ENCODE measurements at regions of chr12 and their contacts with region 1.

Region 1: GRCh38 chr12:120181991-120182631 is 12.4 kb downstream of the GCN1 start:
- DNase-seq: peak; percentile 61 to 88
- H3K4me3 ChIP-seq: no peak overlapping the region
- H3K27ac ChIP-seq: peak overlapping the region; percentile 84
- H3K4me1 ChIP-seq: peaks cover 27% of the 10 kb centered on the region
- H3K27me3 ChIP-seq: no peaks in the 10 kb centered on the region
- CTCF ChIP-seq: no peak

Region 2: GRCh38 chr12:120125792-120126634 is 56.1 kb before region 1 on chr12:
- CTCF ChIA-PET with region 1: no interaction called
- POLR2A ChIA-PET with region 1: interaction called, 14 read pairs
- intact Hi-C with region 1: no loop called
- DNase-seq: no peak
- H3K4me3 ChIP-seq: no peak overlapping the region
- H3K27ac ChIP-seq: no peak overlapping the region
- H3K4me1 ChIP-seq: peaks cover 10% of the 10 kb centered on the region
- H3K27me3 ChIP-seq: no peaks in the 10 kb centered on the region
- CTCF ChIP-seq: no peak

Region 3: DNA sequence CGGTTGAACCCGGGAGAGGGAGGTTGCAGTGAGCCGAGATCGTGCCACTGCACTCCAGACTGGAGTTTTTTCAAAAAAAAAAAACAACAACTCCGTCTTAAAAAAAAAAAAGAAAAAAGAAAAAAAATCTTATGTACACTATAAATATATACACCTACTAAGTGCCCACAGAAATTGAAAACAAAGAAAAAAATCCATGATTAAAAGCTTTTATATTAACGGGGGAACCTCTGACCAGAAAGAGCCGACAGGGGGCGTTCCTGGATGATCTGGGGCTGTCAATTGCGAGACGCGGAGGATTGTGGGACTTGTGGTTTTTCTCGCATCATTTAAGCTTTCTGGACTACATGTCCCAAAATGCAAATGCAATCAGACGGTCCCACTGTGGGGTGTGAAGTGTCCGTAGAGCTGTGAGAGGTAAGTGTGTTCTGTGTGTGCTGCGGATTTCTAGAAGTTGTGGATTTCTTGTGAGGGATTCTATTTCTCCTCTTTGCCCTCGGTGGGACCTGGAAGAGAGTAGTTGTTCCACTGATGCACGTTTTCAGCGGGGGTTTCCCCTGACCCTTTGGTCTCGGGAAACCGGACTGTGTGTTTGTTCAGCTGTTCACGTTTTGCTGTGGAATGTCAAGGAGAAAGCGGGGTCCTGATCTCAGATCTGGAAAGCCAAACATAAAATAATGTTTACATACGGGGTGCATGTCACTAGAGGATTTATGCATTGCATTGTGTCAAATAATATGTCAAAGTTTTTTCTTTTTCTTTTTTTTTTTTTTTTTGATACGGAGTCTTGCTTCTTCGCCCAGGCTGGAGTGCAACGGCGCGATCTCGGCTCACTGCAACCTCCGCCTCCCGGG is 120.1 kb after region 1 on chr12 and contains the start of gene SIRT4:
- CTCF ChIA-PET with region 1: no interaction called
- POLR2A ChIA-PET with region 1: no interaction called
- intact Hi-C with region 1: no loop called
- DNase-seq: peak; percentile 78 to 82
- H3K4me3 ChIP-seq: peak within 1 kb of the TSS; percentile 74
- H3K27ac ChIP-seq: no peak within 1 kb of the TSS
- H3K4me1 ChIP-seq: no peaks in the 10 kb centered on the region
- H3K27me3 ChIP-seq: no peaks in the 10 kb centered on the region
- CTCF ChIP-seq: peak; percentile 85
- total RNA-seq, gene SIRT4: 3.2 and 3.6 TPM in 2 replicates

Region 4: DNA sequence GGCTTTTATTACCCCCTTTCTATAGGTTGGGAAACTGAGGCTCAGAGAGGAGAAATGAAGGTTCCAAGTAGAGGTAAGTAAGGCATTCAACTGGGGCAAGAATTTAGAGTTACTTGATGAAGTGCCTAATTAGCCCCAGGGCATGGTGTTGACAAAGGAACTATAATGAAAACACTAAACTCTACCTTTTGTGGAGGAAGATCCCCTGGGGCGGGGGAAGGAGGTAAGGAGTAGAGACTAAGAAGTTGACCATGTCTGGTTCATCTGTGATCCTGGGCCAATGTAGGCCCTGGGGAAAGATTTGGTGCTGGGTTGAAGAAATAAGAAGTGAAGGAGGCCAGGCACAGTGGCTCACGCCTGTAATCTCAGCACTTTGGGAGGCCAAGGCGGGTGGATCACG is 239.6 kb after region 1 on chr12:
- CTCF ChIA-PET with region 1: interaction called, 18 read pairs
- POLR2A ChIA-PET with region 1: no interaction called
- intact Hi-C with region 1: no loop called
- DNase-seq: no peak
- H3K4me3 ChIP-seq: no peak overlapping the region
- H3K27ac ChIP-seq: no peak overlapping the region
- H3K4me1 ChIP-seq: no peaks in the 10 kb centered on the region
- H3K27me3 ChIP-seq: no peaks in the 10 kb centered on the region
- CTCF ChIP-seq: no peak